BJ (cell line): ENCODE measurements at regions of chr13 and their contacts with region 1.

Region 1: GRCh38 chr13:27826379-27827353 is 34.4 kb downstream of the GSX1 start:
- DNase-seq: peak; percentile 16
- H3K4me3 ChIP-seq: no peak overlapping the region
- H3K27me3 ChIP-seq: peaks cover 7% of the 10 kb centered on the region
- CTCF ChIP-seq: peak; percentile 91

Region 2: DNA sequence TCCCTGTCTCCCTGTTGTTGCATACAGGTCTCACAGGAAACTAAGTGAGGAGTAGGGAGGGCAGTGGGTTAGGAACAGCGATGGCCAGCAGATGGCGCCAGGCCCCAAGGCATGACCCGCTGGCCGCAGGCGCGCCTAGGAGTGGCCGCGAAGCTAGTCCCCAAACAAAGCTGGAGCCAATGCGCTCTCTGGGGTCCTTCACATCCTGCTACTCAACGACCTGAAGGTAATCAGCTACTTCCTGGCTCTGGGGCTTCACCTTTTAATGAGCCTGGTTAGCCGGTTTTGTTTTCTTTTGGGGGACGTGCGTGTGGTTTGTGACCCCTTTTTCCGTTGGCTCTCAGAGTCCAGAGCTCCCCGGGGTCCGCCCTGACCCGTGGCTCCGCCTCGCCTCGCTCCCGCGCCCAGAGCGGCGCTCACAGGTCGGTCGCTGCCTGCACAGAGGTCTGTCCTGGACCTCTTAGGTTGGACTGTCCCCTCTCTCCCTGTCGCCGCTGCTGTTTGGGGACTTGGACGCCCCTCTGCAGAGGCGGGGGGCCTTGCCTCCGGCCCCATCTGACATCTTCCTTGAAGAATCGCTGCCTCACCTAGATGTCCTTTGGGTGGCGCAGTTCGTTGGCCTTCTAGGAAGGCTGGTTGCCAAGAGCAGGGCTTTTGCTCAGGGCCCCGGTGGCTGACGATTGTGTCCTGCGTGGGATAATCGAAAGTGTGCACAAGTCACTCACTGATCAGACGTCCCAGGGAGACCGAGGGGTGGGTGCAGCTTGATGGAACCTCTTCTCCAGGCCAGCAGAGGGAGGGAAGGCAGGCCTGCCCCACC is 464.4 kb before region 1 on chr13:
- CTCF ChIA-PET with region 1: interaction called, 220 read pairs
- POLR2A ChIA-PET with region 1: no interaction called
- DNase-seq: no peak
- H3K4me3 ChIP-seq: peak overlapping the region; percentile 40
- H3K27me3 ChIP-seq: peaks cover 7% of the 10 kb centered on the region; the same call in 1 of the 2 replicates
- CTCF ChIP-seq: peak; percentile 98

Region 3: DNA sequence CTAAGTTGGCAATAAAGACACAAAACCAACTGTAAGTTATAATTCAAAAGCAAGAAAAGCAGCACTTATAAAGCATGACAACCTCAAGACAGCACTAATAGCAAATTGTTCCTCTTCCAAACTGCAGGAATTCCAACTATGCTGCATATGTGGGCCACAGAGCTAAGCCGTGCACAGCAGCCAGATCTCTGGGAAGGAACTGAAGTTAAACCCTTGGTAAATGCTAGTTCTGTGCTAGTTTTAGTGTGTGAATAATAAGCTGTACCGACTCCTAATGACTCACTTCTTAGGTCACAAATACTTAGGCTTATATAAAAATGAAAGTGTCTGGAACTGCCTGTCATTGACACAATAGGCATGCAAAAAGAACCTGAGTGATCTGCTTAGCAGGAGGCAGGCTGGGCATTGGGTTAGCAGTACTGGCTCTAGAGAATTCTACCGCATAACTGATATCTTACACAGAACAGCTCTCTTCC is 423.4 kb before region 1 on chr13:
- CTCF ChIA-PET with region 1: interaction called, 20 read pairs
- POLR2A ChIA-PET with region 1: no interaction called
- DNase-seq: peak; percentile 84
- H3K4me3 ChIP-seq: no peak overlapping the region
- H3K27me3 ChIP-seq: peaks cover 9% of the 10 kb centered on the region
- CTCF ChIP-seq: no peak

Region 4: DNA sequence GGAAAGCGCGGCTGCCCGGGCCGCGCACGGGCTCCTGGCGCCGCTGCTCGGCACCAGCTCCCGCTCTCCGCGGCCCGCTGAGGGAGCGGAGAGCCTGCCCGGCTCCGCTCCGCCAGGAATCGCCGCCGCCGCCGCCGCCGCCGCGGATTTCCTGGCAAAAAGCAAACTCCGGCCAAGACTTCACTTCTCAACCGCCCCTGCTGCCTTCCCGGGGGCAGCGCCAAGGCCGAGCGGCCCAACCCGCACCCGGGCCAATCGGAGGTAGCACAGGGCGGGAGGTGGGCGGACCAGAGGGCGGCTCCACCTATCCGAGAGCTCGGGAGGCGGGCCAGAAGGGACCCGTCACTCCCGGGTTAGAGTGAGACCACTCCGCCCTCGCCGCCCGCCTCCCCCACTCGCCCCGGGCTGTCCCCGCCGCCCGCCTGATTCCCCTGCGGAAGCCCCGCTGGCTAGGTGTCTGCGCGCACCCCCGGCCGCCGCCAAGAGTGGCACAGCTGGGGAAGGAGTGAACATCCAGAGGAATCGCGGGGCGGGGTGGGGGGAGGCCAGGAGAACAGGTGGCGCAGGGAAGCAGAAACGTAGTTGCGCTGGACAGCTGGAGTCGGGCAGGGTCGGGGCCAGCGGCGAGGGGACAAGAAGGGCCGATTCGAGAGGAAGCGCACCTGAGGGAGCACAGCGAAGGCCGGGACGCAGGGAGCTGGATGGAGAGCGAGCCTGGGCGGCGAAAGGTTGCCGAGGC is 206.1 kb before region 1 on chr13 and contains the start of gene LNX2:
- CTCF ChIA-PET with region 1: interaction called, 11 read pairs
- POLR2A ChIA-PET with region 1: no interaction called
- DNase-seq: peak; percentile 67
- H3K4me3 ChIP-seq: peak within 1 kb of the TSS; percentile 87
- H3K27me3 ChIP-seq: no peaks in the 10 kb centered on the region
- CTCF ChIP-seq: no peak
- polyA plus RNA-seq, gene LNX2: 4.6 and 5.5 TPM in 2 replicates

Region 5: DNA sequence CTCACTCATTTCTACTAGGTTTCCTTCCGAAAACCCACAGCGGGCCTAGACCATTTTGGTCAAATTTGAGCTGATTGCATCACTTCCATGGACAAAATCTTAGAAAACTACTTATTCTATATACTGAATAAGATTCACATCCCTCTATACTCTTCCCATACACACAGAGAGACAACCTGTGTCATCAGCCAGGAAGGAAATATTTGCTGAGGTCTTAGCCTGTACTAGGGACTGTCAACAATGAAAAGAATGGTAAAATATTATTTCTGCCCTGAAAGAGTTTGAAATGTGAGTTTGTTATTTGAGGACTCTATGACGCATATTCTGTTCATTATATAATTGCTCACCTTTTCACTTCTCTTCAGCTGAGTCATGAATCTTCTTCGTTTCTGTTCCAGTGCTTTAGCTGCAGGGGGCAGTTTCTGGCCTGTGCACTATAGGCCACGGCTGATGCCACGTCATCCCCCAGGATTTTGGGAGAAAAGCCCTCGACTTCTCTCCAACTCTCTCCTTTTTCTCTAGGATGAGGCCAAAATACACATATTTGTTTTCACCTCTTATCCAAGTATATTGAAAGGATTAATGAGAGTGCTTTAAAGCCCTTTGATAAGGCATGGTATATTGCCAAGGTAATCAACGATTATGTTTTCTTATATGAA is 13.3 kb after region 1 on chr13:
- CTCF ChIA-PET with region 1: interaction called, 88 read pairs
- POLR2A ChIA-PET with region 1: no interaction called
- DNase-seq: no peak
- H3K4me3 ChIP-seq: no peak overlapping the region
- H3K27me3 ChIP-seq: no peaks in the 10 kb centered on the region; the same call in 1 of the 2 replicates
- CTCF ChIP-seq: no peak

Region 6: GRCh38 chr13:27977476-27978300 is 151.0 kb after region 1 on chr13:
- CTCF ChIA-PET with region 1: interaction called, 178 read pairs
- POLR2A ChIA-PET with region 1: no interaction called
- DNase-seq: no peak
- H3K4me3 ChIP-seq: no peak overlapping the region
- H3K27me3 ChIP-seq: peaks cover 72% of the 10 kb centered on the region
- CTCF ChIP-seq: no peak